ENCODE measurements at regions of chr17 and their contacts with region 1.

Region 1: GRCh38 chr17:50547035-50547735 is at the start of gene SPATA20:
- DNase-seq: peak; percentile 96 to 97
- ATAC-seq: peak; percentile 93
- H3K4me3 ChIP-seq: peak within 1 kb of the TSS; percentile 21 to 31
- H3K27ac ChIP-seq: no peak within 1 kb of the TSS
- H3K4me1 ChIP-seq: no peaks in the 10 kb centered on the region
- H3K27me3 ChIP-seq: no peaks in the 10 kb centered on the region
- total RNA-seq, gene SPATA20: 27.8 to 41.9 TPM

Region 2: GRCh38 chr17:50507871-50508572 is 39.2 kb before region 1 on chr17 and contains the start of gene MYCBPAP:
- intact Hi-C with region 1: no loop called
- DNase-seq: peak; percentile 91 to 96
- ATAC-seq: peak; percentile 92
- H3K4me3 ChIP-seq: peak within 1 kb of the TSS; percentile 35 to 63
- H3K27ac ChIP-seq: no peak within 1 kb of the TSS
- H3K4me1 ChIP-seq: no peaks in the 10 kb centered on the region
- H3K27me3 ChIP-seq: no peaks in the 10 kb centered on the region
- total RNA-seq, gene MYCBPAP: 1.3 to 1.8 TPM

Region 3: GRCh38 chr17:50626037-50626574 is 78.9 kb after region 1 on chr17:
- intact Hi-C with region 1: loop called (anchors 1 to 2 kb)
- DNase-seq: peak; percentile 85 to 93
- ATAC-seq: peak; percentile 73
- H3K4me3 ChIP-seq: no peak overlapping the region
- H3K27ac ChIP-seq: no peak overlapping the region
- H3K4me1 ChIP-seq: no peaks in the 10 kb centered on the region
- H3K27me3 ChIP-seq: no peaks in the 10 kb centered on the region

Region 4: GRCh38 chr17:50681263-50682210 is 134.4 kb after region 1 on chr17:
- intact Hi-C with region 1: loop called in 1 of 2 experiments (anchors 5 kb)
- DNase-seq: peak in 1 of 2 donors; percentile 58
- ATAC-seq: peak; percentile 40
- H3K4me3 ChIP-seq: no peak overlapping the region
- H3K27ac ChIP-seq: no peak overlapping the region
- H3K4me1 ChIP-seq: no peaks in the 10 kb centered on the region
- H3K27me3 ChIP-seq: no peaks in the 10 kb centered on the region

Region 5: DNA sequence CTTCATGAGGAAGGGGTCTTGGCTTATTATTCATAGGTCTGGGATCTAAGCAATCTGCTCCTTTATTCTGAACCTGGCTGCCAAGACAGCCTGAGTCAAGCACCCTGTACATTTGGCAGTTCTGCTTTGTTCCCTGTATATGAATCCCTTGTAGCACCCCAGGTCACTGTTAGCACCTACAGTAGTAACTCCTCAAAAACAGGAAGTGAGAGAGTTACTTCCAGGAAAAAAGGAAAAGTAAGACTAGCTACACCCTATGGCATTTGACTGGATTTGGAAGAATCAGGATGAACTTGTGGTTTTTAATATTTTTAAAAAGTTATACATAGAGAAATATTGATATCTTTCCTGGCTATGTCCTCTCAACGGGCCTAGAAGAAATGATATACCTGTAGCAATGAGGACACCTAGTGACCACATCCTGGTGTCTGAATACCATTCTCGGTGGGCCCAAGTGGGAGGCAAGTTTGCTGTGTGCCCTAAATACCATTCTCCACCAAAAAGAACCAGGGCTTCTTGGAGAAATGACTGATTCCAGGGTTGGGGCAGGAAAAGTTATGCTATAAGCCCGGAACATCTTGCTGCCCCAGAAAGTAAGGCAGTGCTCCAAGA is 150.6 kb after region 1 on chr17:
- intact Hi-C with region 1: loop called (anchors 2 to 5 kb)
- DNase-seq: no peak
- ATAC-seq: no peak
- H3K4me3 ChIP-seq: no peak overlapping the region
- H3K27ac ChIP-seq: no peak overlapping the region
- H3K4me1 ChIP-seq: peaks cover 0 to 4% of the 10 kb centered on the region in 2 donors
- H3K27me3 ChIP-seq: no peaks in the 10 kb centered on the region

Region 6: GRCh38 chr17:50783193-50783660 is 236.0 kb after region 1 on chr17:
- intact Hi-C with region 1: loop called in 1 of 2 experiments (anchors 5 kb)
- DNase-seq: peak; percentile 85 to 95
- ATAC-seq: peak; percentile 90
- H3K4me3 ChIP-seq: no peak overlapping the region
- H3K27ac ChIP-seq: no peak overlapping the region
- H3K4me1 ChIP-seq: no peaks in the 10 kb centered on the region
- H3K27me3 ChIP-seq: no peaks in the 10 kb centered on the region

Region 7: GRCh38 chr17:50841949-50842354 is 294.8 kb after region 1 on chr17:
- intact Hi-C with region 1: loop called (anchors 2 kb)
- DNase-seq: peak; percentile 71 to 91
- ATAC-seq: peak; percentile 79
- H3K4me3 ChIP-seq: no peak overlapping the region
- H3K27ac ChIP-seq: no peak overlapping the region
- H3K4me1 ChIP-seq: no peaks in the 10 kb centered on the region
- H3K27me3 ChIP-seq: no peaks in the 10 kb centered on the region

Region 8: DNA sequence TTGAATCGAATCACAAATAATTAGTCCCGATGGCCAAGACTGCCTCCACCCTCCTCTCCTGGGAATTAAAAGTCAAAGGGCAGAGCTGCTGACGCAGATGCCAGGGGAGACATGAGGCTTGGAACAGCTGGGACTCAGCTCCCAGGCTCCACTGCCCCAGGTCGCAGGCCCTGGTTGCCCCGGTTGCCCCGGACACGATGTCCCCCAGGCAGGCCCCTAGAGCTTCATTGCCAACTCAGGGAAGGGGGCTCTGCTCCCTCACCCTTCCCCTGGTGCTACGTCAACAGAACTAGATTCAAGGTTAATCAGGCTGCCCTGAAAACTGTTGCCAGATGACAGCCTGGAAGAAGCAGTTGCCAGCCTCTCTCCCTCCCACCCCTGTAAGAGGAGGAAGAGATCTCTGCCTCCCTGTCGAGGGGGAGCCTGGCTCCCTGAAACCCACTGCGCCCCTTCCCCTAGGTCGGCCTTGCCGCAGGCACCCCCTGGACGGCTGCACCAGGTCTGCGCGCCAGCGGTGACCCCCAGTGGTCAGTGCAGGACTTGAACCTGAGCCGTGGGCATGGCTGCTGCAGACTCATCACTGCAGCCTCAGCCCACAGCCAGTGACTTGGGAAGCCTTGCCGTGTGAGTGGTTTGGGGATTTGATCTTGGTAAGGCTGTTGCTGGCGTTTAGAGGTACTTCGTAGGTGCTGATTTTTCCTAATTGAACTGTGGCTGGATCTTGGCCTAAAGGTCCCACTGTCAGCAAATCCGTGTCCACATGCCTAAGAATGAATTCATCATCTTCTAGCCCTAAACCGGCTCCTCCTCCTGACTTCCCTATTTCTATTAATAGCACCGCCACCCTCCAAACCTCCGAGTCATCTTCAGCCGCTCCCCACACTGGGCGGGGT is 403.1 kb after region 1 on chr17:
- intact Hi-C with region 1: loop called in 1 of 2 experiments (anchors 10 kb)
- DNase-seq: peak; percentile 89 to 93
- ATAC-seq: peak; percentile 89
- H3K4me3 ChIP-seq: no peak overlapping the region
- H3K27ac ChIP-seq: peak overlapping the region in 1 of 2 donors; percentile 9
- H3K4me1 ChIP-seq: no peaks in the 10 kb centered on the region
- H3K27me3 ChIP-seq: no peaks in the 10 kb centered on the region